Activated CD4-positive, alpha-beta T cell treated with anti-CD3 and anti-CD28 coated beads, Interleukin-2, amount 10 ng/mL, durations not matched to agents 24 days and 14 days (primary cell): ENCODE measurements at regions of chr2 and their contacts with region 1.

Region 1: DNA sequence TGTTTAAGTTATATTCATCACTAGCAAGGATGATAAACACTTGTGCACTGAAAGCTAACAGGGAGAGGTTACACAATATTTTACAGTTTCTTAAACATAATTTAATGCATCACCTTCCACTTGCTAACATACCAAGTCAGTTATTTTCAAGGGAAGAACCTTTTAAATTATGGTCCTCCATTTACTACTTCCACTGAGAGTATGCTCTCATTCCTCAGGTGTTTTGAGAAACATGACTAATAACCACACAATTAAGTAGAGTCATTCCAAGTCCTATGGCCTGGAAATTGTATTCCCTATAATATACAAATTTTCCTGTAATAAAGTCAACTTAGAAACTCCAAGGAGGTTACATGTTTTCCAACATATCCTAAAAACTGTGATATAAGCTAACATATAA is 152.3 kb upstream of the STON1 start:
- DNase-seq: no peak
- H3K4me3 Mint-ChIP-seq: no peak overlapping the region
- H3K27ac Mint-ChIP-seq: no peak overlapping the region
- H3K4me1 Mint-ChIP-seq: no peaks in the 10 kb centered on the region
- H3K27me3 Mint-ChIP-seq: no peaks in the 10 kb centered on the region

Region 2: GRCh38 chr2:48356701-48357325 is 20.8 kb before region 1 on chr2:
- intact Hi-C with region 1: loop called (anchors 2 kb)
- DNase-seq: peak; percentile 85
- H3K4me3 Mint-ChIP-seq: peak overlapping the region; percentile 75
- H3K27ac Mint-ChIP-seq: peak overlapping the region; percentile 94
- H3K4me1 Mint-ChIP-seq: peaks cover 48% of the 10 kb centered on the region
- H3K27me3 Mint-ChIP-seq: no peaks in the 10 kb centered on the region